ENCODE measurements at regions of chr1 and their contacts with region 1.

Region 1: GRCh38 chr1:39901698-39902459 is at the start of gene MYCL:
- DNase-seq: peak; percentile 79 to 94
- H3K4me3 ChIP-seq: peak within 1 kb of the TSS; percentile 81 to 89 (median 84)
- H3K27ac ChIP-seq: no peak within 1 kb of the TSS
- H3K4me1 ChIP-seq: peaks cover 13 to 29% (median 17%) of the 10 kb centered on the region in 4 experiments; a peak in 6 of 7 replicates
- H3K27me3 ChIP-seq: peaks cover 3 to 12% (median 10%) of the 10 kb centered on the region in 4 experiments; a peak in 6 of 7 replicates
- CTCF ChIP-seq: peak; percentile 76 to 86 (median 76)
- EP300 ChIP-seq: peak; percentile 1 to 63; a peak in 1 of 3 replicates
- POLR2A ChIP-seq: peak in 1 of 2 experiments; percentile 18; a peak in 1 of 3 replicates
- RAD21 ChIP-seq: peak; percentile 57 to 77
- total RNA-seq, gene MYCL: 28.8 and 29.9 TPM in 2 replicates

Region 2: GRCh38 chr1:39816415-39817090 is 85.3 kb before region 1 on chr1:
- CTCF ChIA-PET with region 1: interaction called, 78 read pairs
- POLR2A ChIA-PET with region 1: interaction called, 3 read pairs
- DNase-seq: peak; percentile 43 to 92
- H3K4me3 ChIP-seq: no peak overlapping the region
- H3K27ac ChIP-seq: no peak overlapping the region
- H3K4me1 ChIP-seq: no peaks in the 10 kb centered on the region
- H3K27me3 ChIP-seq: no peaks in the 10 kb centered on the region; a peak in 1 of 7 replicates
- CTCF ChIP-seq: peak; percentile 81 to 85 (median 82)
- EP300 ChIP-seq: no peak
- POLR2A ChIP-seq: no peak
- RAD21 ChIP-seq: peak; percentile 86 to 89

Region 3: GRCh38 chr1:39825432-39825951 is 76.4 kb before region 1 on chr1:
- CTCF ChIA-PET with region 1: interaction called, 78 read pairs
- POLR2A ChIA-PET with region 1: interaction called, 4 read pairs
- DNase-seq: no peak
- H3K4me3 ChIP-seq: no peak overlapping the region
- H3K27ac ChIP-seq: no peak overlapping the region
- H3K4me1 ChIP-seq: no peaks in the 10 kb centered on the region
- H3K27me3 ChIP-seq: no peaks in the 10 kb centered on the region
- CTCF ChIP-seq: no peak
- EP300 ChIP-seq: no peak
- POLR2A ChIP-seq: no peak
- RAD21 ChIP-seq: no peak

Region 4: GRCh38 chr1:39877980-39878956 is 23.6 kb before region 1 on chr1:
- CTCF ChIA-PET with region 1: interaction called, 9 read pairs
- POLR2A ChIA-PET with region 1: interaction called, 43 read pairs
- DNase-seq: no peak
- H3K4me3 ChIP-seq: peak overlapping the region in 1 of 4 experiments; percentile 2; a peak in 1 of 8 replicates
- H3K27ac ChIP-seq: no peak overlapping the region
- H3K4me1 ChIP-seq: peaks cover 1 to 6% (median 4%) of the 10 kb centered on the region in 4 experiments; a peak in 4 of 7 replicates
- H3K27me3 ChIP-seq: no peaks in the 10 kb centered on the region
- CTCF ChIP-seq: no peak
- EP300 ChIP-seq: no peak
- POLR2A ChIP-seq: no peak
- RAD21 ChIP-seq: no peak

Region 5: DNA sequence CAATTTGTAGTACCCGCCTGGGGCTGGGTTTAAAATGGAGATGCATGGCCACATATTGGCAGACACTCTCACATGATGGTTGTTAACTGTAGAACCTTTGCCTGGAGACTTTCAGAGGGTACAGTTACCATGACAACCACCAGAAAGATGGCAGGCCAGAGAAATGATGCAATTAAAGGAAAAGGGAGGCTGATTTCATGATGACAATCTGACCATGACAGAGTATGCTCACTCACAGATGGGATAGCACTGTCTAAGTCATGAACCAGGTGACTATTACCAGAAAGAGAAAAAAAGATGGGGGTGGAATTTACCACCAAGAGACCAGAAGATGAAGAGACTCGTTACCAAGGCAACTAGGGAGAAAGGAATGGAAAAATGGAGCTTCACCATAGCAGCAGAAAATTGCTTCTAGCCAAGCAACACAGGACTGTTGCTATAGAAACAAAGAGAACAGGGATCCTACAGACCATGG is 15.1 kb before region 1 on chr1:
- CTCF ChIA-PET with region 1: interaction called, 13 read pairs
- POLR2A ChIA-PET with region 1: interaction called, 43 read pairs
- DNase-seq: no peak
- H3K4me3 ChIP-seq: no peak overlapping the region
- H3K27ac ChIP-seq: no peak overlapping the region
- H3K4me1 ChIP-seq: peaks cover 0 to 11% (median 4%) of the 10 kb centered on the region in 4 experiments; a peak in 4 of 7 replicates
- H3K27me3 ChIP-seq: no peaks in the 10 kb centered on the region
- CTCF ChIP-seq: no peak
- EP300 ChIP-seq: no peak
- POLR2A ChIP-seq: no peak
- RAD21 ChIP-seq: no peak

Region 6: GRCh38 chr1:39954816-39955546 is 53.1 kb after region 1 on chr1 and contains the start of gene MFSD2A:
- CTCF ChIA-PET with region 1: interaction called, 11 read pairs
- POLR2A ChIA-PET with region 1: interaction called, 6 read pairs
- DNase-seq: peak; percentile 69 to 95
- H3K4me3 ChIP-seq: peak within 1 kb of the TSS; percentile 50 to 78 (median 69)
- H3K27ac ChIP-seq: no peak within 1 kb of the TSS
- H3K4me1 ChIP-seq: peaks cover under 1 to 9% (median 7%) of the 10 kb centered on the region in 4 experiments
- H3K27me3 ChIP-seq: peaks cover 0 to 16% (median 12%) of the 10 kb centered on the region in 4 experiments; a peak in 5 of 7 replicates
- CTCF ChIP-seq: no peak
- EP300 ChIP-seq: no peak
- POLR2A ChIP-seq: peak; percentile 84 to 89
- RAD21 ChIP-seq: no peak
- total RNA-seq, gene MFSD2A: 25.9 and 26.6 TPM in 2 replicates

Region 7: GRCh38 chr1:40040511-40041465 is 138.9 kb after region 1 on chr1 and contains the start of gene CAP1:
- CTCF ChIA-PET with region 1: no interaction called
- POLR2A ChIA-PET with region 1: interaction called, 17 read pairs
- DNase-seq: peak; percentile 97 to 99
- H3K4me3 ChIP-seq: peak within 1 kb of the TSS; percentile 79 to 99 (median 93)
- H3K27ac ChIP-seq: peak within 1 kb of the TSS; percentile 96
- H3K4me1 ChIP-seq: peaks cover 3 to 7% (median 3%) of the 10 kb centered on the region in 4 experiments; a peak in 4 of 7 replicates
- H3K27me3 ChIP-seq: no peaks in the 10 kb centered on the region
- CTCF ChIP-seq: no peak
- EP300 ChIP-seq: no peak
- POLR2A ChIP-seq: peak in 1 of 2 experiments; percentile 4; a peak in 1 of 3 replicates
- RAD21 ChIP-seq: no peak
- total RNA-seq, gene CAP1: 274 and 295 TPM in 2 replicates

Measured in H1 (cell line).